Natural killer cell (primary cell): ENCODE measurements at regions of chr1 and their contacts with region 1.

Region 1: GRCh38 chr1:91555821-91556531 is 55.3 kb downstream of the CDC7 start:
- DNase-seq: peak; percentile 57 to 93
- ATAC-seq: peak; percentile 81 to 94 (median 87)
- H3K4me3 ChIP-seq: no peak overlapping the region
- H3K4me3 Mint-ChIP-seq: peak overlapping the region; percentile 81
- H3K27ac ChIP-seq: peak overlapping the region; percentile 90
- H3K27ac Mint-ChIP-seq: peak overlapping the region; percentile 83 to 99
- H3K4me1 ChIP-seq: peaks cover 73% of the 10 kb centered on the region
- H3K4me1 Mint-ChIP-seq: peaks cover 94 to 97% of the 10 kb centered on the region in 2 donors
- H3K27me3 ChIP-seq: no peaks in the 10 kb centered on the region
- H3K27me3 Mint-ChIP-seq: no peaks in the 10 kb centered on the region
- CTCF ChIP-seq: no peak

Region 2: GRCh38 chr1:91523482-91523881 is 32.5 kb before region 1 on chr1:
- intact Hi-C with region 1: loop called (anchors 5 kb)
- DNase-seq: peak in 1 of 2 donors; percentile 17
- ATAC-seq: peak; percentile 79 to 84 (median 84)
- H3K4me3 ChIP-seq: no peak overlapping the region
- H3K4me3 Mint-ChIP-seq: peak overlapping the region; percentile 51
- H3K27ac ChIP-seq: peak overlapping the region; percentile 54
- H3K27ac Mint-ChIP-seq: peak overlapping the region; percentile 79 to 88
- H3K4me1 ChIP-seq: peaks cover 17% of the 10 kb centered on the region
- H3K4me1 Mint-ChIP-seq: peaks cover 55 to 65% of the 10 kb centered on the region in 2 donors
- H3K27me3 ChIP-seq: no peaks in the 10 kb centered on the region
- H3K27me3 Mint-ChIP-seq: no peaks in the 10 kb centered on the region
- CTCF ChIP-seq: no peak

Region 3: DNA sequence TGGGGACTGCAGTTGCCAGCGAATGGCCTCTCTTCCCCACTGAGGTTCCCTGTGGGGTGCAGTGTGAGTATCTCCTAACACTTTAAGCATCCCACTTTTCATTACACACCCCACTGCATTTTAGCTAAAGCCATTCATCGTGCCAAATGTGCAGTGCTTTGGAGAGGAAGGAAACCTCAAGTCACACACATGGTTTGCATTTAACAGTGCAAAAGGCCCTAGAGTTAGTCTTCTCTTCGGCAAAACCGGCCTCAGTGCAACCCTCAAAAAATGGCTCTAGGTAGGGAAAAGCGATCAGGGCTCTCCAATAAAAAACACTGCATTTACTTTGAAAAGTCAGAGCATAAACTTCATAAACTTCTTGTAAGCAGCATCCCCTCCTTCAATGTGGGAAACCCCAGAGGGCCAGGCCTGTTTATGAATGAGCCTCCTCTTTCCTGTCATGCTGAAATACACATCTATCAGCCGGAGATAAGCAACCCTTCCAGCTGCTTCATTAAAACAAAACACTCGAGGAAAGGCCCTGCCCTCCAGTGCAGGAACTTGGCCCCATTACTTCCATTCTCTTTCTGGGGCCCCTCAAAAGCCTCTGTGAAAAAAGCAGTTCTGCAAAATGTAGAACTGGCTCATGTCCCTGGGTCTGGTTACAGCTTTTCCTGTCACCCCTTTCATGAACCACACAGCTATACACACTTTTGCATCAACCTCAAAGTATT is 128.7 kb after region 1 on chr1:
- intact Hi-C with region 1: loop called (anchors 10 kb)
- DNase-seq: peak in 1 of 2 donors; percentile 61
- ATAC-seq: peak; percentile 67 to 73 (median 73)
- H3K4me3 ChIP-seq: no peak overlapping the region
- H3K4me3 Mint-ChIP-seq: peak overlapping the region; percentile 68
- H3K27ac ChIP-seq: peak overlapping the region; percentile 57
- H3K27ac Mint-ChIP-seq: peak overlapping the region; percentile 91 to 92
- H3K4me1 ChIP-seq: peaks cover 39% of the 10 kb centered on the region
- H3K4me1 Mint-ChIP-seq: peaks cover 69 to 81% of the 10 kb centered on the region in 2 donors
- H3K27me3 ChIP-seq: no peaks in the 10 kb centered on the region
- H3K27me3 Mint-ChIP-seq: no peaks in the 10 kb centered on the region
- CTCF ChIP-seq: no peak

Region 4: DNA sequence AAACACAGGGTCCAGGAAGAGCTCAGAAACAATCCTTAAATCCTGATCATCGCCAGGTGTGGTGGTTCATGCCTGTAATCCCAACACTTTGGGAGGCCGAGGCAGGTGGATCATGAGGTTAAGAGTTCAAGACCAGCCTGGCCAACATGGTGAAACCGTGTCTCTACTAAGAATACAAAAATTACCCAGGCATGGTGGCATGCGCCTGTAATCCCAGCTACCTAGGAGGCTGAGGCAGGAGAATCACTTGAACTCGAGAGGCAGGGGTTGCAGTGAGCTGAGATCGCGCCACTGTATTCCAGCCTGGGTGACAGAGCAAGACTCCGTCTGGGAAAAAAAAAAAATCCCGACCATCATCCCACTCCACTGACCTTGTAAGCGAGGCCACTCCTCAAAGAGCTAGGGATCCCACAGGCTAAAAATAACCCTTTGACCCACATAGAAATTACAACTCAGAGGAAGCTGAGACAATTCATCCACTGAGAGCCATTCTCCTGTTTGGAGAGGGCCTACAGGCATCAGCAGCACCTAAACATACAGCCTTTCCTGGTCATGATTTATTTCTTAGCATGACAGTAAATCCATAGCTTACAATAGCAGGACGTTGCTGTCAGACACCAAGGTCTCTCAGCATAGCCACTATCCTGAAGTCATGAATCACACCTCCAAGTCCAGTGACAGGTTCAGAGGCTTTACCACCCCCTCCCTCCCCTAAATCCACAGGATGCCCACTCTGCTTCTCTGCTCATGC is 263.2 kb after region 1 on chr1:
- intact Hi-C with region 1: loop called (anchors 5 kb)
- DNase-seq: no peak
- ATAC-seq: peak in 2 of 3 donors; percentile 41 to 57
- H3K4me3 ChIP-seq: no peak overlapping the region
- H3K4me3 Mint-ChIP-seq: peak overlapping the region; percentile 58
- H3K27ac ChIP-seq: no peak overlapping the region
- H3K27ac Mint-ChIP-seq: peak overlapping the region; percentile 70 to 95
- H3K4me1 ChIP-seq: peaks cover 44% of the 10 kb centered on the region
- H3K4me1 Mint-ChIP-seq: peaks cover 82 to 83% of the 10 kb centered on the region in 2 donors
- H3K27me3 ChIP-seq: no peaks in the 10 kb centered on the region
- H3K27me3 Mint-ChIP-seq: no peaks in the 10 kb centered on the region
- CTCF ChIP-seq: no peak

Region 5: GRCh38 chr1:91876040-91876470 is 320.1 kb after region 1 on chr1:
- intact Hi-C with region 1: loop called (anchors 5 kb)
- DNase-seq: peak; percentile 55 to 65
- ATAC-seq: peak; percentile 69 to 84 (median 82)
- H3K4me3 ChIP-seq: no peak overlapping the region
- H3K4me3 Mint-ChIP-seq: peak overlapping the region; percentile 68
- H3K27ac ChIP-seq: peak overlapping the region; percentile 12
- H3K27ac Mint-ChIP-seq: peak overlapping the region; percentile 85 to 91
- H3K4me1 ChIP-seq: peaks cover 75% of the 10 kb centered on the region
- H3K4me1 Mint-ChIP-seq: peaks cover 85 to 93% of the 10 kb centered on the region in 2 donors
- H3K27me3 ChIP-seq: no peaks in the 10 kb centered on the region
- H3K27me3 Mint-ChIP-seq: no peaks in the 10 kb centered on the region
- CTCF ChIP-seq: no peak